ENCODE measurements at regions of chr1 and their contacts with region 1.

Region 1: DNA sequence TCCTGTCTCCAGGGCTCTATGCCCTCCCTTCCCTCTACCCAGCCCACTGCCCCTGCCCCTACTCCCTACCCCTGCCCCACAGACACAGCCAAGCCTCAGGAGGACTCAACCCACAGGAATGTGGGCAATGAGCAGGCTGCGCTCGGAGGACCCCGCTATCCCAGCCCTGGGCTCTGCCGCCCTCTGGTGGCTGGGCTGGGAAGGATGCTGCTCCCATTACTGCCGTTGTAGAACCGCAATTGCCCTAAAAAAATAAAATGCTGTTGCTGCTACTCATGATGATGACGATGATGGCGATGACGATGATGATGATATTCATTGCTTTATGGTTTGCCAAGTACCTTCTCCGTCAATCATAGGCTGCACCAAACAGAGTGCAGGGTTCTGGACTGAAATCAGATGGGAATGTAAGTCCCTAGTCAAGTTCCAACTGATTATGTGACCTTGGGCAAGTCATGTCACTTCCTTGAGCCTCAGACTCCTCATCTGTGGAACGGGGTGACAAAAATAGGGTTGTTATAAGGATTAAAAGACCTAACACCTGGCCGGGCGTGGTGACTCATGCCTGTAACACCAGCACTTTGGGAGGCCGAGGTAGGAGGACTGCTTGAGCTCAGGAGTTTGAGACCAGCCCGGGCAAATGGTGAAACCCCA is 24.6 kb downstream of the ARHGEF19 start:
- DNase-seq: peak; percentile 89
- ATAC-seq: peak; percentile 97
- H3K4me3 ChIP-seq: no peak overlapping the region
- H3K27ac ChIP-seq: no peak overlapping the region
- H3K4me1 ChIP-seq: peaks cover 4% of the 10 kb centered on the region
- H3K27me3 ChIP-seq: no peaks in the 10 kb centered on the region
- CTCF ChIP-seq: peak; percentile 99
- POLR2A ChIP-seq: peak; percentile 66
- RAD21 ChIP-seq: peak; percentile 100

Region 2: GRCh38 chr1:15328351-15329103 is 859.3 kb before region 1 on chr1:
- CTCF ChIA-PET with region 1: no interaction called
- POLR2A ChIA-PET with region 1: no interaction called
- dilution Hi-C with region 1: no loop called
- in situ Hi-C with region 1: no loop called
- intact Hi-C with region 1: no loop called
- DNase-seq: peak; percentile 64
- ATAC-seq: no peak
- H3K4me3 ChIP-seq: no peak overlapping the region
- H3K27ac ChIP-seq: no peak overlapping the region
- H3K4me1 ChIP-seq: peaks cover 8% of the 10 kb centered on the region
- H3K27me3 ChIP-seq: no peaks in the 10 kb centered on the region
- CTCF ChIP-seq: no peak
- POLR2A ChIP-seq: no peak
- RAD21 ChIP-seq: no peak

Region 3: GRCh38 chr1:15799004-15799936 is 388.6 kb before region 1 on chr1:
- CTCF ChIA-PET with region 1: interaction called, 4 read pairs
- POLR2A ChIA-PET with region 1: interaction called, 3 read pairs
- dilution Hi-C with region 1: no loop called
- in situ Hi-C with region 1: loop called (anchors 25 kb)
- intact Hi-C with region 1: loop called (anchors 5 kb)
- DNase-seq: peak; percentile 96
- ATAC-seq: peak; percentile 86
- H3K4me3 ChIP-seq: no peak overlapping the region
- H3K27ac ChIP-seq: peak overlapping the region; percentile 81
- H3K4me1 ChIP-seq: peaks cover 43% of the 10 kb centered on the region
- H3K27me3 ChIP-seq: no peaks in the 10 kb centered on the region
- CTCF ChIP-seq: no peak
- POLR2A ChIP-seq: no peak
- RAD21 ChIP-seq: no peak

Region 4: GRCh38 chr1:16146279-16147155 is 41.4 kb before region 1 on chr1:
- CTCF ChIA-PET with region 1: no interaction called
- POLR2A ChIA-PET with region 1: no interaction called
- dilution Hi-C with region 1: no loop called
- in situ Hi-C with region 1: no loop called
- intact Hi-C with region 1: loop called (anchors 2 kb)
- DNase-seq: peak; percentile 92
- ATAC-seq: peak; percentile 67
- H3K4me3 ChIP-seq: peak overlapping the region; percentile 13; the same call in 1 of the 2 replicates
- H3K27ac ChIP-seq: peak overlapping the region; percentile 99
- H3K4me1 ChIP-seq: peaks cover 51% of the 10 kb centered on the region
- H3K27me3 ChIP-seq: no peaks in the 10 kb centered on the region
- CTCF ChIP-seq: no peak
- POLR2A ChIP-seq: no peak; the same call in 1 of the 2 replicates
- RAD21 ChIP-seq: no peak

Region 5: GRCh38 chr1:16153999-16154673 is 33.7 kb before region 1 on chr1:
- CTCF ChIA-PET with region 1: no interaction called
- POLR2A ChIA-PET with region 1: no interaction called
- dilution Hi-C with region 1: no loop called
- in situ Hi-C with region 1: no loop called
- intact Hi-C with region 1: loop called (anchors 1 kb)
- DNase-seq: no peak
- ATAC-seq: no peak
- H3K4me3 ChIP-seq: peak overlapping the region; percentile 83
- H3K27ac ChIP-seq: peak overlapping the region; percentile 96
- H3K4me1 ChIP-seq: peaks cover 40% of the 10 kb centered on the region
- H3K27me3 ChIP-seq: no peaks in the 10 kb centered on the region
- CTCF ChIP-seq: no peak
- POLR2A ChIP-seq: no peak
- RAD21 ChIP-seq: no peak

Region 6: GRCh38 chr1:16243936-16244649 is 56.2 kb after region 1 on chr1:
- CTCF ChIA-PET with region 1: no interaction called
- POLR2A ChIA-PET with region 1: no interaction called
- dilution Hi-C with region 1: no loop called
- in situ Hi-C with region 1: no loop called
- intact Hi-C with region 1: loop called (anchors 2 kb)
- DNase-seq: peak; percentile 81
- ATAC-seq: peak; percentile 93
- H3K4me3 ChIP-seq: no peak overlapping the region
- H3K27ac ChIP-seq: no peak overlapping the region
- H3K4me1 ChIP-seq: peaks cover 10% of the 10 kb centered on the region
- H3K27me3 ChIP-seq: no peaks in the 10 kb centered on the region
- CTCF ChIP-seq: peak; percentile 89
- POLR2A ChIP-seq: peak; percentile 31; the same call in 1 of the 2 replicates
- RAD21 ChIP-seq: peak; percentile 90

Region 7: DNA sequence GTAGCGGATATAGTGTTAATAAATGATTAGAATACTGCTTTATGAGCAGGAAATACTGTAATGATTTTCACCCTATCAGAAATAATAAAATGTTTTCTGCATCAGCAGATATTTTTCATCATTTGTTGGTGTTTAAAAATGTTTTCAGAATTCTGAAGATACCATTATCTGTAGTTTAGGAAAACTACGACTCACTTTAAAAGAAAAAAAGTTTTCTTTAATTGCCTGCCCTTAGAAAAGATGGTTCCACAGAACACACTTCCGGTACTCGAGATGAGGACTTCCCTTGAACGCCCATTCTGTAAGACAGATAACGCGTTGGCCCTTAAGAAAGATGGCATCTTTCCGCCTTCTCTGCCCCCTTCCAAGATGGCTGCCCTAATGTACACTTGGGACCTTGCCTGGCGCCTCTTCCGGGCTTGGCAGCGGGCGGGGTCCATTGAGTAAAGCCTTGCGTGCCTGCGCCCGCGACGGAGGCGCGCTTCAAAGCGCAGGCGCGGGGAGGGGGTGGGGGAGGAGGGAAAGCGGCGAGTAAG is 178.9 kb after region 1 on chr1 and contains the start of gene SZRD1:
- CTCF ChIA-PET with region 1: no interaction called
- POLR2A ChIA-PET with region 1: no interaction called
- dilution Hi-C with region 1: no loop called
- in situ Hi-C with region 1: no loop called
- intact Hi-C with region 1: loop called (anchors 5 kb)
- DNase-seq: peak; percentile 99
- ATAC-seq: peak; percentile 82
- H3K4me3 ChIP-seq: peak within 1 kb of the TSS; percentile 88
- H3K27ac ChIP-seq: peak within 1 kb of the TSS; percentile 96
- H3K4me1 ChIP-seq: no peaks in the 10 kb centered on the region; the same call in none of the 2 replicates
- H3K27me3 ChIP-seq: no peaks in the 10 kb centered on the region
- CTCF ChIP-seq: no peak
- POLR2A ChIP-seq: no peak
- RAD21 ChIP-seq: no peak
- total RNA-seq, gene SZRD1: 104 and 119 TPM in 2 replicates